ENCODE measurements at regions of chr10 and their contacts with region 1.

Region 1: DNA sequence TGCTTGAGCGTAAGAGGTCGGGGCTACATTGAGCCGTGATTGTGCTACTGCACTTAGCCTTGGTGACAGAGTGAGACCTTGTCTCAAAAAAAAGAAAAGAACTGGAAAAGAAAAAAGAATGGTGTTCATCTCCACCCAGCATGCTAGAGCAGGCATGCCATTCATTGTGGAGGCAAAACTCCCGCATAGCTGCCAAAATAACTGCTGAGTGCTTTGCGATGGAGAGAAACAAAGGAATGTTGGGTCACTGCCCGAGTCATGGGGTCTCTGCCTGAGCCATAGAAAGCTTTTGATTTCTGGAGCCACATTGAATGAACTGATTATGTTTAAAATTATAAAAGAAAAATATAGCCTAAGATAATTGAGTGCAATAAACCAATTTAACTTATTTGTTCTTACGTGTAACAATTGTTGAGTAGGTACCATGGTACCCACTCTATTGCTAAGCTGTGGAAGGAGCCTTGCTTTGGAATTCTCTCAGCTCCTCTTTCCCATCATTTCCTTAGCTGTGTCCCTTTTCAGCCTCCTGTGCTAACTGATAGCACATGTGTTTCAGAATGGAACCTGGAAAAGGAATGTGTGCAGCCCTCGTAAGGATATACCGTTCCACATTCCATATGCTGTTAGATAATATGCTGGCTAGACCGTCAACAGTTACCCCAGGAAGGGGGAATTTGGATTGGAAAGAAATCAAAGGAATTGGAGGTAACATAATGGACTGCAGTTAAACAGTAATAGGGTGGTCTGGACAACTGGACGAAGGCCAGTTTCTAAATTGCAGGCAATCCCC is 99.0 kb downstream of the KIAA1217 start:
- DNase-seq: no peak
- ATAC-seq: no peak
- H3K4me3 ChIP-seq: no peak overlapping the region
- H3K27ac ChIP-seq: peak overlapping the region; percentile 88 to 96 (median 95)
- H3K4me1 ChIP-seq: peaks cover 74 to 77% of the 10 kb centered on the region in 2 donors
- H3K27me3 ChIP-seq: no peaks in the 10 kb centered on the region
- CTCF ChIP-seq: no peak
- POLR2A ChIP-seq: no peak

Region 2: DNA sequence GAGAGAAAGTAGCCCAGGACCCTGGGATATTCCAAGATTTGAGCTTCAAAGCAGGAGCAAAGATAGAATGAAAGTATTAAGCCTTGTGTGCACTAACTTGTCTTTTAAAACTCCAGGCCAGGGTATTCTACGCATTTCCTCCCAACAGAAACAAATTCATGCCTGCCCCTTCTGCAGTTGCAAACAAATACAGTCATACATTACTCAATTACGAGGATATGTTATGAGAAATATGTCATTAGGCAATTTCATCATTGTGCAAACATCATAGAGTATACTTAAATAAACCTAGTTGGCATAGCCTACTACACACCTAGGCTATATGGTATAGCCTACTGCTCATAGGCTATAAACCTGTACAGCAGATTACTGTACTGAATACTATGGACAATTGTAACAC is 253.5 kb before region 1 on chr10:
- in situ Hi-C with region 1: no loop called
- intact Hi-C with region 1: no loop called
- DNase-seq: no peak
- ATAC-seq: no peak
- H3K4me3 ChIP-seq: no peak overlapping the region
- H3K27ac ChIP-seq: no peak overlapping the region
- H3K4me1 ChIP-seq: no peaks in the 10 kb centered on the region
- H3K27me3 ChIP-seq: no peaks in the 10 kb centered on the region
- CTCF ChIP-seq: no peak
- POLR2A ChIP-seq: no peak

Region 3: GRCh38 chr10:24255881-24256311 is 52.0 kb before region 1 on chr10:
- in situ Hi-C with region 1: no loop called
- intact Hi-C with region 1: loop called (anchors 2 kb)
- DNase-seq: peak; percentile 80 to 90
- ATAC-seq: peak; percentile 57 to 67
- H3K4me3 ChIP-seq: peak overlapping the region; percentile 5 to 26 (median 20)
- H3K27ac ChIP-seq: peak overlapping the region; percentile 94 to 98 (median 96)
- H3K4me1 ChIP-seq: peaks cover 95 to 99% of the 10 kb centered on the region in 2 donors
- H3K27me3 ChIP-seq: no peaks in the 10 kb centered on the region
- CTCF ChIP-seq: no peak
- POLR2A ChIP-seq: peak; percentile 32 to 41

Region 4: DNA sequence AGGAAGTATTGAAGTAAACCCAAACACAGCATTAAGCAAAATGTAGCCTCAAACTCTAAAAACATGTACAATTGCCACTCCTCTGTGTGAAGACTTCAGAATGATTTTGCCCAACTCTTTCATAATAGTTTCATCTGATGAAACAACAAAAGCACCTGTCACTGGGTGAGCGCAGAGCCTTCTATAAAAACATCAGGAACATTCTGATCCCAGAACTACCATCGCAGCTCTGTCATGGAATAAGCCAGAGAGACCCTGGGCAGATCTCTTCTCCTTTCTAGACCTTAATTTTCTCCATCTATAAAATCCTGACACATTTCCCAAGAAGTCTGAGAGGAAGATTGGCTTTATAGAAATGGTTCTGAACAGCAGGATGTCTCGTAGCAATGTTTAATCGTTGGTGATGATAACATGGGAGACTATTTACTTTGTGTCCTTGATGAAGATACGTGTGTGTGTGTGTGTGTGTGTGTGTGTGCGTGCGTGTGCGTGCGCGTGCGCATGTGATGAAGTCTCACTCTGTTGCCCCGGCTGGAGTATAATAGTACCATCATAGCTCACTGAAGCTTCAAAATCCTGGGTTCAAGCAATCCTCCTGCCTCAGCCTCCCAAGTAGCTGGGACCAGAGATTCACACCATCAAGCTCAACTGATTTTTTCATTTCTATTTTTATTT is 99.1 kb after region 1 on chr10:
- in situ Hi-C with region 1: no loop called
- intact Hi-C with region 1: loop called (anchors 5 kb)
- DNase-seq: peak; percentile 55 to 74
- ATAC-seq: peak; percentile 89 to 91
- H3K4me3 ChIP-seq: no peak overlapping the region
- H3K27ac ChIP-seq: peak overlapping the region; percentile 84 to 97 (median 92)
- H3K4me1 ChIP-seq: peaks cover 66 to 76% of the 10 kb centered on the region in 2 donors
- H3K27me3 ChIP-seq: no peaks in the 10 kb centered on the region
- CTCF ChIP-seq: no peak
- POLR2A ChIP-seq: peak; percentile 81 to 82

Region 5: GRCh38 chr10:24465891-24466818 is 158.3 kb after region 1 on chr10:
- in situ Hi-C with region 1: no loop called
- intact Hi-C with region 1: loop called (anchors 5 kb)
- DNase-seq: peak; percentile 45 to 53
- ATAC-seq: peak; percentile 53 to 70
- H3K4me3 ChIP-seq: peak overlapping the region; percentile 7 to 53 (median 34)
- H3K27ac ChIP-seq: peak overlapping the region; percentile 69 to 87 (median 83)
- H3K4me1 ChIP-seq: peaks cover 88% of the 10 kb centered on the region in 2 donors
- H3K27me3 ChIP-seq: no peaks in the 10 kb centered on the region
- CTCF ChIP-seq: no peak
- POLR2A ChIP-seq: peak; percentile 20 to 75

Measured in gastrocnemius medialis (tissue), 4 donors.